ENCODE measurements at regions of chr20 and their contacts with region 1.

Region 1: DNA sequence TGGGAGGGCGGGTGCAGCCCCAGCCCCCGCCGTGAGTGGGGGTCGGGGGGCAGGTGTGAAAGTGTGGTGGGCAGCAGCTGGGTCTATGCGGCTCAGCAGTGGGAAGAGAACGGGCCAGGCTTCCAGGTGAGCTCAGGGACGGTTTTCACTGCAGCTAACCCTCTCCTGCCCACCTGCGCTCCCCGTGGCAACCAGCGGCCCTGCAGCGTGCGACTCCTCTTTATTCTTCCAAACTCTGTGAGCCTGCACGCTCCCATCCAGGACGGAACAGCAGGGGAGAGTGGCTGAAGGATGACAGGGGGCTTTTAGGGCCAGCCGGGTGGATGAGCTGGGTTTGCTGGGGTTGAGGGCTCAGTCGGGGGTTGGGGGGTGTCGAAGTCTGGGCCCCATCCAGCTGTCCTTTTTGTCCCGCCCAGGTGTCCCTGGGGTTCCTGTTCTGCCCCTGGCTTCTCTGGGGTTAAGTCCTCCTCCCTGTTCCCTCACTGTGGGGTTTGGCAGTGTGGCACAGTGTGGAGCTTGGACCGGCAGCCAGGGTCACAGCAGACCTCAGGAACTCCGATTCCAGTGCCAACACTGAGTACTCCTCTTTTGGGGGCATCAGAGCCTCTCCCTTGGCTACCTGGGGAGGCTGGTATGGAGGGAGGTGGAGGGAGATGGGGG is 836 bp upstream of the BIRC7 start:
- DNase-seq: peak; percentile 61 to 70
- H3K4me3 ChIP-seq: no peak overlapping the region
- H3K27ac ChIP-seq: no peak overlapping the region
- H3K4me1 ChIP-seq: peaks cover under 1 to 12% of the 10 kb centered on the region in 2 donors
- H3K27me3 ChIP-seq: no peaks in the 10 kb centered on the region
- CTCF ChIP-seq: peak in 5 of 6 experiments; percentile 55 to 79 (median 72)
- POLR2A ChIP-seq: no peak

Region 2: GRCh38 chr20:63186625-63187331 is 48.1 kb before region 1 on chr20:
- intact Hi-C with region 1: loop called (anchors 5 kb)
- DNase-seq: no peak
- H3K4me3 ChIP-seq: no peak overlapping the region
- H3K27ac ChIP-seq: no peak overlapping the region
- H3K4me1 ChIP-seq: no peaks in the 10 kb centered on the region
- H3K27me3 ChIP-seq: no peaks in the 10 kb centered on the region
- CTCF ChIP-seq: no peak
- POLR2A ChIP-seq: no peak

Region 3: DNA sequence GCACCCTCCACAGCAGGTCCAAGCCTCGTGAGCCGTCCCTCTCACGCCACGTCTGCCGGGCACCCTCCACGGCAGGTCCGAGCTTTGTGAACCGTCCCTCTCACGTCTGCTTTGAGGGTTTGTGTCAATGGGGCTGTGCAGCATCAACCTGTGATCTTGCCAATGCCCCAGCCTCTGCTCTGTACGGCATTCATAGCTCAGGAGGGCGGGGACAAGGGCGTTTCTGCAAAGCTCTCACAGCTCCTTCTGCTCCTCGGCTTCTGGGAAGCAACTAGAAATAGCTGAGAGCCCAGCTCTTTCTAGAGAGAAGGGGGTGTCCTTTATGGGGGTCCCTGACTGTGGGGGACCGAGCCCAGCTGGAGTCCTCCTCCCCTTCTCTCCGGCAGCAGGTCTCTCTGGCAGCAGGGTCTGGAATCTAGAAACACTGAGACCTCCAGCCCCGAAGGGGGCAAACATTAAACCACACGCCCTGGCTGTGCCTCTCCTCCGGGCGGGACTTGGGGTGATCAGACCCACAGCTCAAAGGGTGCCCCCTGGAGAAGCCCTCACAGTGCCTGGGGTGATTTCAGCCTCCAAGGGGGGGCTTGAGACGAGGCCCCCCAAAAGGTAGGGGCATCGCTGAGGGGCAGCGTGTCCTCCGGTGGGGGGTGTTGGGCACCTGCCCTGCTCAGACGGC is 167.5 kb after region 1 on chr20:
- intact Hi-C with region 1: no loop called
- DNase-seq: no peak
- H3K4me3 ChIP-seq: no peak overlapping the region
- H3K27ac ChIP-seq: no peak overlapping the region
- H3K4me1 ChIP-seq: no peaks in the 10 kb centered on the region
- H3K27me3 ChIP-seq: no peaks in the 10 kb centered on the region
- CTCF ChIP-seq: no peak
- POLR2A ChIP-seq: no peak

Measured in thyroid gland (tissue), 4 donors.